ENCODE measurements at regions of chrX and their contacts with region 1.

Region 1: GRCh38 chrX:43750248-43750676 is 94.2 kb downstream of the MAOA start:
- DNase-seq: peak; percentile 26
- H3K4me3 Mint-ChIP-seq: no peak overlapping the region
- H3K27ac Mint-ChIP-seq: peak overlapping the region; percentile 42
- H3K4me1 Mint-ChIP-seq: peaks cover 40% of the 10 kb centered on the region
- H3K27me3 Mint-ChIP-seq: no peaks in the 10 kb centered on the region

Region 2: DNA sequence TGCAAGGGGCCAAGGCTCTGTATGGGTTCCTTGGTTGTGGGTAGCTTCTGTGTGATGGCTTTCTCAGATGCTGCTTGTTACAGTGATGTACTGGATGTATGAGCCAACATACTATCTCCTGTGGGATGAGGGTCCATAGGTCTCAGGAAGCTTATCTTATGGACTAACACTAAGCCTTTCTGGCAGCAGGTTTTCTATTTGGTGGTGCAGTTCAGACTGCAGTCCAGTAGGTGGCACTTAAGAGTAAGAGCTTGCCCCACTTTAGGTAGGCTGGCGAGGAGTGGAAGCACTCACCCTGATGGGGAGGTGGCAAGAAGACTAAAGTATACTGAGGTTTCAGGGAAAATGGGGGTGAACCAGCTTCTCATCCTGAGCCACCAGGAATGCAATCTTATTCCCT is 400.9 kb before region 1 on chrX:
- intact Hi-C with region 1: loop called (anchors 10 kb)
- DNase-seq: peak; percentile 8
- H3K4me3 Mint-ChIP-seq: no peak overlapping the region
- H3K27ac Mint-ChIP-seq: no peak overlapping the region
- H3K4me1 Mint-ChIP-seq: peaks cover 7% of the 10 kb centered on the region
- H3K27me3 Mint-ChIP-seq: peaks cover 3% of the 10 kb centered on the region

Region 3: DNA sequence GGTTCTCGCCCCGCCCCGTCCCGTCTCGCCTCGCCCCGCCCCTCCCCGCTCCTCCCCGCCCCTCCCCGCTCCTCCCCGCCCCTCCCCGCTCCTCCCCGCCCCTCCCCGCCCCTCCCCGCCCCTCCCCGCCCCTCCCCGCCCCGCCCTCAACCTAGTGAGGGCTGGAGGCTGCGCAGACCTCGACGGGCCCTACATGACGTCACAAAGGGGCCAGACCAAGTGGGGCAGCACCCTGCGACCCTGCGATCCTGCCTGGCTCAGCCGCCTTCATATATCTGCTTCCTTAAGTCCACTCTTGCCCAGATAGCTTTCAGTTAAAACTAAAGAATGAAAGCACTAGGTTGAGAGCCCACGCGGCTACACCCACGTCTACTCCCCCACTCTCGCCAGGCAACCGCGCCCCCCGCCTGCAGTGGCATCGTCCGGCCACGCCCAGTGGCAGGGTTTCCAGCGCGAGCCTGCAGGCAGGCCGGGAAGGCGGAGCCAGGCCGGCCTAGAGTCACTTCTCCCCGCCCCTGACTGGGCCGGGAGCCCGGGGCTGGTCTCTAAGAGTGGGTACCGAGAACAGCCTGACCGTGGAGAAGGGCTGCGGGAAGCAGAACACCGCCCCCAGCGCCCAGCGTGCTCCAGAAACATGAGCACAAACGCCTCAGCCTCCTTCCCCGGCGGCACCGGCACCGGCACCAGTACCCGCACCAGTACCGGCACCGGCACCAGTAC is 95.7 kb before region 1 on chrX:
- intact Hi-C with region 1: loop called (anchors 5 kb)
- DNase-seq: peak; percentile 86
- H3K4me3 Mint-ChIP-seq: peak overlapping the region; percentile 97
- H3K27ac Mint-ChIP-seq: peak overlapping the region; percentile 100
- H3K4me1 Mint-ChIP-seq: peaks cover 17% of the 10 kb centered on the region
- H3K27me3 Mint-ChIP-seq: no peaks in the 10 kb centered on the region

Region 4: DNA sequence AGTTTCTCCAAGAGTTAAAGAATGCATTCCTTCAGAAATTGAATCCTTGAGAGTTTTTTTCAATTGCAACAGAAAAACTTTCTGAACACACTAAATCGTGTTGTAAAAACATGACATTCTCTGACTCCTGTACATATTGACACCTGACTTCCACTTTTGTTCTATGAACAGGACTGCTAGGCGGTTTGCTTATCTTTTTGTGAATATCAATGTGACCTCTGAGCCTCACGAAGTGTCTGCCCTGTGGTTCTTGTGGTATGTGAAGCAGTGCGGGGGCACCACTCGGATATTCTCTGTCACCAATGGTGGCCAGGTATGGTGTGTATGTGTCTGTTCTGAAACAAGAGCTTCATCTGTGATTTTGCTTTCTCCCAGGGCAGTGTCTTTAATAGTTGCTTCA is 22.3 kb before region 1 on chrX:
- intact Hi-C with region 1: no loop called
- DNase-seq: no peak
- H3K4me3 Mint-ChIP-seq: peak overlapping the region; percentile 33
- H3K27ac Mint-ChIP-seq: peak overlapping the region; percentile 82
- H3K4me1 Mint-ChIP-seq: peaks cover 29% of the 10 kb centered on the region
- H3K27me3 Mint-ChIP-seq: no peaks in the 10 kb centered on the region

Region 5: GRCh38 chrX:43813898-43814297 is 63.6 kb after region 1 on chrX:
- intact Hi-C with region 1: loop called (anchors 5 kb)
- DNase-seq: peak; percentile 12
- H3K4me3 Mint-ChIP-seq: no peak overlapping the region
- H3K27ac Mint-ChIP-seq: peak overlapping the region; percentile 81
- H3K4me1 Mint-ChIP-seq: peaks cover 46% of the 10 kb centered on the region
- H3K27me3 Mint-ChIP-seq: no peaks in the 10 kb centered on the region

Measured in activated T-helper 2 cell treated with anti-CD3 and anti-CD28 coated beads, Interferon-gamma antibody, Interleukin-2, Interleukin-4, amounts not matched to agents 10 μg/mL and 5 μg/mL and 100 μg/mL, durations not matched to agents 14 hours and 24 hours and 36 hours (primary cell).